Activated CD4-positive, alpha-beta T cell treated with anti-CD3 and anti-CD28 coated beads, Interleukin-2, amount 10 ng/mL, durations not matched to agents 24 days and 14 days (primary cell): ENCODE measurements at regions of chr12 and their contacts with region 1.

Region 1: DNA sequence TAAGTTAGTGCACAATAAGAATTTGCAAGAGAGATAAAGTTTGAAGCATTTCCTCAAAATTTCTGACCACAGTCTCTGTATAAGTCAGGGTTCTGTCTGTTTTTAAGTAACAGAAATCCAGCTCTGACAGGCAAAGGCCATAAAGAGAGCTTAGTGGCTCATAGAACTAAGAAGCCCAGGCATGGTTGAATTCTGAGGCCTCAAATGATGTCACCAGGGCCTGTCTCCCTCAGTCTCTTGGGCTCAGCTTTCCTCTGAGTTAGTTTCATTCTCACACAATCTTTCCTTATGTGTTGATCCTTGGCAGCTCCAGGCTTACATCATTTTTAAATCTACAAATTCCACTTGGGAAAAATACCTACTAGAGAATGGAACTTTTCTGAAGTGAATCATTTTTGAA is 173.4 kb upstream of the ATP2B1 start:
- DNase-seq: peak; percentile 71
- H3K4me3 Mint-ChIP-seq: peak overlapping the region; percentile 20
- H3K27ac Mint-ChIP-seq: peak overlapping the region; percentile 78
- H3K4me1 Mint-ChIP-seq: peaks cover 29% of the 10 kb centered on the region
- H3K27me3 Mint-ChIP-seq: no peaks in the 10 kb centered on the region

Region 2: DNA sequence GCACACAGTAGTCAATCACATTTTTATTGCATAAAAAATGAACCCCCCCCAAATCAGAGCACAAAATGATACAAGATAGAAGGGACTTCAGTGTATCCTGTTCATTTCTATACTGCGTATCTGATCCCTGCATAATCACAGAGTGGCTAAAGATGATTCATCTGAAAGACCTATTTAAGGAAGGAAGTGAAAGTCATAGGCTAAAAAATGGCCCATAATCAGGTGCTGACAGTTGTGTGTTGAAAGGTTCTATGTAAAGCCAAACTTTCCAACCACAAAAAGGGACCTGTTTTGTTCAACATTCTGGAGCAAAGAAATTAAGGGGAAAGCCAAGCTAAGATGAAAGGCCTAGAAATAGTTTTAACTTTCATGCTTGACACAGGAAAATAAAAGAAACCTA is 25.6 kb before region 1 on chr12:
- intact Hi-C with region 1: loop called (anchors 1 kb)
- DNase-seq: peak; percentile 62
- H3K4me3 Mint-ChIP-seq: peak overlapping the region; percentile 3
- H3K27ac Mint-ChIP-seq: peak overlapping the region; percentile 56
- H3K4me1 Mint-ChIP-seq: peaks cover 42% of the 10 kb centered on the region
- H3K27me3 Mint-ChIP-seq: peaks cover 2% of the 10 kb centered on the region

Region 3: GRCh38 chr12:89949457-89950195 is 67.6 kb after region 1 on chr12:
- intact Hi-C with region 1: loop called (anchors 2 kb)
- DNase-seq: peak; percentile 86
- H3K4me3 Mint-ChIP-seq: peak overlapping the region; percentile 1
- H3K27ac Mint-ChIP-seq: peak overlapping the region; percentile 4
- H3K4me1 Mint-ChIP-seq: peaks cover 19% of the 10 kb centered on the region
- H3K27me3 Mint-ChIP-seq: peaks cover 2% of the 10 kb centered on the region